ENCODE measurements at regions of chr12 and their contacts with region 1.

Region 1: GRCh38 chr12:6053541-6053940 is 70.9 kb downstream of the VWF start:
- DNase-seq: no peak
- ATAC-seq: no peak
- H3K4me3 ChIP-seq: no peak overlapping the region
- H3K4me3 Mint-ChIP-seq: no peak overlapping the region
- H3K27ac ChIP-seq: no peak overlapping the region
- H3K27ac Mint-ChIP-seq: no peak overlapping the region
- H3K4me1 ChIP-seq: peaks cover 0 to 9% of the 10 kb centered on the region in 2 experiments
- H3K4me1 Mint-ChIP-seq: peaks cover 0 to 6% (median 0%) of the 10 kb centered on the region in 3 donors
- H3K27me3 ChIP-seq: peaks cover 0 to 36% of the 10 kb centered on the region in 2 experiments
- H3K27me3 Mint-ChIP-seq: peaks cover 7 to 30% of the 10 kb centered on the region in 2 donors

Region 2: GRCh38 chr12:6039894-6040568 is 13.5 kb before region 1 on chr12:
- CTCF ChIA-PET with region 1: no interaction called
- POLR2A ChIA-PET with region 1: no interaction called
- DNase-seq: peak in 26 of 35 experiments; percentile 5 to 76 (median 30)
- ATAC-seq: peak; percentile 73 to 84 (median 78)
- H3K4me3 ChIP-seq: no peak overlapping the region
- H3K4me3 Mint-ChIP-seq: no peak overlapping the region
- H3K27ac ChIP-seq: no peak overlapping the region
- H3K27ac Mint-ChIP-seq: no peak overlapping the region
- H3K4me1 ChIP-seq: peaks cover 0 to 6% of the 10 kb centered on the region in 2 experiments
- H3K4me1 Mint-ChIP-seq: peaks cover 2 to 5% (median 2%) of the 10 kb centered on the region in 3 donors
- H3K27me3 ChIP-seq: peaks cover 0 to 22% of the 10 kb centered on the region in 2 experiments
- H3K27me3 Mint-ChIP-seq: peaks cover 2 to 4% of the 10 kb centered on the region in 2 donors

Region 3: GRCh38 chr12:6392504-6393077 is 339.1 kb after region 1 on chr12:
- CTCF ChIA-PET with region 1: no interaction called
- POLR2A ChIA-PET with region 1: interaction called in 1 of 2 experiments, 10 read pairs
- DNase-seq: no peak
- ATAC-seq: no peak
- H3K4me3 ChIP-seq: no peak overlapping the region
- H3K4me3 Mint-ChIP-seq: no peak overlapping the region
- H3K27ac ChIP-seq: no peak overlapping the region
- H3K27ac Mint-ChIP-seq: peak overlapping the region in 1 of 2 donors; percentile 34
- H3K4me1 ChIP-seq: peaks cover 0 to 2% of the 10 kb centered on the region in 2 experiments
- H3K4me1 Mint-ChIP-seq: no peaks in the 10 kb centered on the region
- H3K27me3 ChIP-seq: peaks cover 0 to 2% of the 10 kb centered on the region in 2 experiments
- H3K27me3 Mint-ChIP-seq: no peaks in the 10 kb centered on the region